GM13976 (cell line): ENCODE measurements at regions of chr11 and their contacts with region 1.

Region 1: DNA sequence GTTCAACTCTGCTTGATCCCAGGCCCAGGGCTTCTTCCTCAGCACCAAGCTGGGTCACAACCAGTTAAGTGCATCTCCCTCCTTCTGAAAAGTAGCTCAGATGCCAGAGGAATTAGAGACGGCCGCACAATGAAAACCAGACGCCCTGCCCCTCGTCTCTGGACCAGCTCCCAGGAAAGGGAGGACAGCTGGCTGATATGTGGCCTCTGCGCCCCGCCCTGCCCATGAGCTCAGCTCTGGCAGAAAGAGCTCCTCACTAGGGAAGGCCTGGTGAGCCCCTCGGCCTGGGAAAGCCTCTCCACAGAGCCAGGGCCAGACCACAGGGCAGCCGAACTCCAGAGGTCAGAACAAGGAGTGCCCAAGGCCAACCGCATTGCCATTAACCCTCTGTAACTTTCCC is 18.1 kb upstream of the SCGB1A1 start:
- DNase-seq: no peak
- CTCF ChIP-seq: no peak

Region 2: DNA sequence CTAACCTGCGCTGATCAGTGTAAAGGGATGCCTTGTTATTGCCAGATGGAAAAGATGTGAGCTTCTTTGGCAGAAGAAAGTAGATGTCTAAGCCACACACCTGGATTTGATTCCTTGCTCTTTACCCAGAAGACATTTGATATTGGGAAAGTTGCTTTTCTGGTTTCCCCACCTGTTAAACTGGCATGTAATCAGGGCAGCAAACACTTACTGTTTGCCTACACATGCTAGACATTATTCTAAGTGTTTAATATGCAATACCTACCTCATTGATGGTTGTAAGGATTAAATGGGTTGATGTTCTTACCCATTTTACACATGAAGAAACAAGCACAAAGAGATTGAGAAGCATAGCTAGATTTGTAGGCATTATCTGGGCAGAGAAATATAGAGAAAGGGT is 46.9 kb before region 1 on chr11:
- in situ Hi-C with region 1: no loop called
- DNase-seq: no peak
- CTCF ChIP-seq: no peak

Region 3: GRCh38 chr11:62694455-62695167 is 293.9 kb after region 1 on chr11:
- in situ Hi-C with region 1: loop called (anchors 10 kb)
- DNase-seq: peak; percentile 84
- CTCF ChIP-seq: peak; percentile 88